Activated CD4-positive, alpha-beta T cell treated with anti-CD3 and anti-CD28 coated beads, Interleukin-2, amount 10 ng/mL, durations not matched to agents 24 days and 14 days (primary cell): ENCODE measurements at regions of chr2 and their contacts with region 1.

Region 1: DNA sequence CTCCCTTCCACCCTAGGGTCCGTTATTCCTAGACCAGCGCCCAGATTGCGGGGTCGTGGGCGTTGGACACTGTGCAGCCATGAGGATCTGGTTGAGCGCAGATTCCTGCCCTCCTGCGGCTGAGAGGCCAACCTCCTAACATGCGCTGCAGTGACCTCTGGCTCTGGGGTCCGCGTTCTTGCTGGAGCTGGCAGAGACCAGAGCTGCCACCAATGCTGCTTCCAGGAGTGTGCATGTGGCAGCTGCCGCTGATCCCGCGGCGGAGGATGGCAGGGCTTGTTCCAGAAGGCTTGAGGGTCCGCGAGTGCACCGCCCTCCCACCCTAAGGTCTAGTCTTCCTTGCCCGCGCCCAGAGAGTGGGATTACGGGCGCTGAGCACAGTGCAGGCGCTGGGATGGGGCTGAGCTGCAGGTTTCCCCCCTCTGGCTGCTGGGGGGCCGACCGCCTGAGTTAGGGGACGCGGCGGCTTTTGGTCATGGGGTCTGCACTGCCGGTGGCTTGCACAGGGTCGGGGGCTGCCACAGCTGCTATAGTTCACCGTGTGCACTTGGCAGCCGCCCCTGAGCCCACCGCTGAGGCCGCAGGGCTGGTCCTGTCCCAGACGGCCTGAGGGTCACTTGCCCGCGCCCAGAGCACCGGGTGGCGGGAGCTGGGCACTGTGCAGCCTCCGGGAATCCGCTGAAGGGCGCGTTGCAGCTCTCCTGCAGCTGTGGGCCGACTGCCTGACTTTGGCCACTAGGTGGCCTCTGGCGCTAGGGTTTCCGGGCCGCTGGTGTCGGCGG is 145.9 kb downstream of the CCDC74A start:
- DNase-seq: peak; percentile 91
- H3K4me3 Mint-ChIP-seq: peak overlapping the region; percentile 23
- H3K27ac Mint-ChIP-seq: no peak overlapping the region
- H3K4me1 Mint-ChIP-seq: peaks cover 5% of the 10 kb centered on the region
- H3K27me3 Mint-ChIP-seq: peaks cover 39% of the 10 kb centered on the region

Region 2: GRCh38 chr2:131413148-131413747 is 260.3 kb before region 1 on chr2:
- intact Hi-C with region 1: loop called (anchors 1 kb)
- DNase-seq: peak; percentile 82
- H3K4me3 Mint-ChIP-seq: no peak overlapping the region
- H3K27ac Mint-ChIP-seq: no peak overlapping the region
- H3K4me1 Mint-ChIP-seq: peaks cover 9% of the 10 kb centered on the region
- H3K27me3 Mint-ChIP-seq: peaks cover 44% of the 10 kb centered on the region

Region 3: GRCh38 chr2:131659168-131659572 is 14.4 kb before region 1 on chr2:
- intact Hi-C with region 1: no loop called
- DNase-seq: no peak
- H3K4me3 Mint-ChIP-seq: no peak overlapping the region
- H3K27ac Mint-ChIP-seq: no peak overlapping the region
- H3K4me1 Mint-ChIP-seq: no peaks in the 10 kb centered on the region
- H3K27me3 Mint-ChIP-seq: peaks cover 26% of the 10 kb centered on the region

Region 4: DNA sequence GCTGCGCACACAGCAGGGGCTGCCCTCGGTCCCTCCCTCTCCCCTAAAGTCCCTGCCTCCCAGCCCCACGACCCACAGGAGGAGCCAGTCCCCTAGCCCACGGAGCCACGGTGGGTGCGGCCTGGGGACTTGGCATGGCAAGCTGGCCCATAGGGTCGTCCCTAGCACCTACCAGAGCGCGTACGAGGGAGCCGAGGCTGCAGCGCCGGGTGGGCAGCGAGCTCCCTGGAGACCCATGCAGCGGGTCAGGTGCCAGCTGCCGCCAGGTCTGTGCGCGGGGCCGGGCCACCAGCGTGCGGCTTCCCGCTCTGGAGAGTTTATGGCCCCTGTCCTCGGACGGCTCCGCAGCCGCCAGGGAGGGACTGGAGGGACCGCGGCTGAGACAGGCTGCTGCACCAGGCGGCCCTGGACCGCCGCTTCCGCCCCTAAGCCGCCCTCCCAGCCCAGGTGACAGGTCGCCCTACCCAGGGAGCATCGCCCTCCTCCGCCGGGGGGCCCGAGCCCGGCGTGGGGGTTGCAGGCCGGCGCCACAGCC is 127.7 kb after region 1 on chr2:
- intact Hi-C with region 1: loop called (anchors 5 kb)
- DNase-seq: no peak
- H3K4me3 Mint-ChIP-seq: no peak overlapping the region
- H3K27ac Mint-ChIP-seq: no peak overlapping the region
- H3K4me1 Mint-ChIP-seq: peaks cover 3% of the 10 kb centered on the region
- H3K27me3 Mint-ChIP-seq: peaks cover 15% of the 10 kb centered on the region

Region 5: GRCh38 chr2:132424526-132425121 is 751.0 kb after region 1 on chr2:
- intact Hi-C with region 1: no loop called
- DNase-seq: no peak
- H3K4me3 Mint-ChIP-seq: no peak overlapping the region
- H3K27ac Mint-ChIP-seq: no peak overlapping the region
- H3K4me1 Mint-ChIP-seq: no peaks in the 10 kb centered on the region
- H3K27me3 Mint-ChIP-seq: no peaks in the 10 kb centered on the region